Aorta (tissue), 5 donors: ENCODE measurements at regions of chr18 and their contacts with region 1.

Region 1: GRCh38 chr18:22494771-22495170 is 77.1 kb upstream of the CTAGE1 start:
- DNase-seq: no peak
- ATAC-seq: peak; percentile 76
- H3K4me3 ChIP-seq: no peak overlapping the region
- H3K27ac ChIP-seq: peak overlapping the region in 1 of 2 donors; percentile 67
- H3K4me1 ChIP-seq: peaks cover 2 to 5% of the 10 kb centered on the region in 2 donors
- H3K27me3 ChIP-seq: no peaks in the 10 kb centered on the region

Region 2: GRCh38 chr18:22471546-22472131 is 23.1 kb before region 1 on chr18:
- intact Hi-C with region 1: loop called in 1 of 2 experiments (anchors 2 kb)
- DNase-seq: peak in 1 of 2 donors; percentile 75
- ATAC-seq: peak; percentile 64
- H3K4me3 ChIP-seq: no peak overlapping the region
- H3K27ac ChIP-seq: peak overlapping the region; percentile 20 to 99
- H3K4me1 ChIP-seq: peaks cover under 1 to 10% of the 10 kb centered on the region in 2 donors
- H3K27me3 ChIP-seq: no peaks in the 10 kb centered on the region

Region 3: DNA sequence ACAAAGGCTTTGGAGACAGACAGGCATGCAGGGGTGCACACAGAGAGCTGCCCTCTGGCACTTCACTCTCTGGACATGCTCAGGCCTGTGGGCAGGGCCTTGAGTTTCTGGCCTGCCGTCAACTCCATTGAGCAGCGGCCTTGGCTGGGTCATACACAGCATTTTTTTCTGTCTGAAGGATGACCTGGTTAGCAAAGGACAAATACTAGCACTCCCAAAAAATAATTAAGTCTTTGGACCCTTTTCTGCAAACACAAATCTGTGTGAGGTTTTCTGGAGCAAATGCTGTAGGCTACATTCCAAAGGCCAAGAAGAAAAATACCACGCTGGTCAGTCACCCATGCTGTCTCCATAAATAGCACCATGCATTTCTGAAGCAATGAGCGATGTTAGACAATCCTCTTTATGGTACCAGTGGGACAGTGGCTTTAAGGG is 47.6 kb after region 1 on chr18:
- intact Hi-C with region 1: loop called in 1 of 2 experiments (anchors 5 kb)
- DNase-seq: peak; percentile 79
- ATAC-seq: peak; percentile 66
- H3K4me3 ChIP-seq: no peak overlapping the region
- H3K27ac ChIP-seq: peak overlapping the region in 1 of 2 donors; percentile 97
- H3K4me1 ChIP-seq: peaks cover 8 to 14% of the 10 kb centered on the region in 2 donors
- H3K27me3 ChIP-seq: no peaks in the 10 kb centered on the region

Region 4: GRCh38 chr18:22632191-22632590 is 137.4 kb after region 1 on chr18:
- intact Hi-C with region 1: no loop called
- DNase-seq: no peak
- ATAC-seq: no peak
- H3K4me3 ChIP-seq: no peak overlapping the region
- H3K27ac ChIP-seq: no peak overlapping the region
- H3K4me1 ChIP-seq: no peaks in the 10 kb centered on the region
- H3K27me3 ChIP-seq: no peaks in the 10 kb centered on the region

Region 5: GRCh38 chr18:23452728-23453679 is 958.2 kb after region 1 on chr18 and contains the start of gene RIOK3:
- intact Hi-C with region 1: no loop called
- DNase-seq: peak; percentile 99
- ATAC-seq: peak; percentile 99
- H3K4me3 ChIP-seq: peak within 1 kb of the TSS; percentile 86 to 99
- H3K27ac ChIP-seq: peak within 1 kb of the TSS; percentile 10 to 95
- H3K4me1 ChIP-seq: peaks cover 0 to under 1% of the 10 kb centered on the region in 2 donors
- H3K27me3 ChIP-seq: no peaks in the 10 kb centered on the region
- total RNA-seq, gene RIOK3: 55.3 to 63.4 TPM